ENCODE measurements at regions of chr5 and their contacts with region 1.

Region 1: DNA sequence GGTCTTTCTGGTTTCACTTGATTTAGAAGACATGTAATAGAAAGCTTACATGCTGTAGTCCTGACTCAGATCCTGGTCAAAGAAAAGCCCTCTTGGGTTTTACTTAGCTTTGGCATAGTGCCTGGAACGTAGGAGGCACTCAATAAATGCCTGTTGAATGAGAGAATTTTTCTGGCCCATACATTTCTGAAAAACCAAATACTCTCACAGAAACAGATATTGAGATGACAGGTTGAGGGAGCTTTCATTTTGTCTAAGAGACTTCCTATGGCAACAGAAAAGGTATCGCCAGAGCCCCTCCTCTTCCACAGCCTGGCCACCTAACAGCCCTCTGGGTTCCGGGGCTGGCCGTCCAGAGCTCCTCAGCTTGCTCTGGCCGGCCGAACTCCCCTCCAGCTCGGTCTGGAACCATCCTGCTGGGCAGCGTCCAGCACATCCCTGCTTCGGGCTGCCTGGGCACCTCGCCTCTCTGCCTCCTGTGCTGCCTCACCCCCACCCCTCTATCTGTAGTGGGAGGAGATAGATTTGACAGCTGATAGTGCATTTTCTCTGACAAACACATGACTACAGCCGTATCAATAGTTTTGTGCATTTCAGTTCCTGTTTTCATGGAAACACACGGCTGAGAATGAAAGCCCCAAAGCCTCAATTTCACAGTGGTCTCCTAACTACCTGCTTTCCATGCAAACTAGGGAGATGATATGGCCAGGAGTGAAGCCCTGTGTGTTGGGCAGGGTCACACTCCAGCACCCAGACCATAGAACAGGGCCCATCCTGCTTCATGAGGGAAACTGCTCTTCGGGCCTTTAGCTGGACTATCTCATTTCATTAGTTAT is 1.1 kb downstream of the IL4 start:
- DNase-seq: no peak
- H3K4me3 ChIP-seq: no peak overlapping the region
- H3K4me3 Mint-ChIP-seq: no peak overlapping the region
- H3K27ac Mint-ChIP-seq: no peak overlapping the region
- H3K4me1 ChIP-seq: peaks cover 5% of the 10 kb centered on the region; the same call in 1 of the 2 replicates
- H3K4me1 Mint-ChIP-seq: no peaks in the 10 kb centered on the region
- H3K27me3 ChIP-seq: no peaks in the 10 kb centered on the region
- H3K27me3 Mint-ChIP-seq: no peaks in the 10 kb centered on the region
- CTCF ChIP-seq: no peak

Region 2: GRCh38 chr5:132205385-132206125 is 469.3 kb before region 1 on chr5:
- CTCF ChIA-PET with region 1: no interaction called
- POLR2A ChIA-PET with region 1: no interaction called
- intact Hi-C with region 1: no loop called
- DNase-seq: no peak
- H3K4me3 ChIP-seq: no peak overlapping the region
- H3K4me3 Mint-ChIP-seq: no peak overlapping the region
- H3K27ac Mint-ChIP-seq: no peak overlapping the region
- H3K4me1 ChIP-seq: peaks cover 5% of the 10 kb centered on the region; the same call in 1 of the 2 replicates
- H3K4me1 Mint-ChIP-seq: no peaks in the 10 kb centered on the region
- H3K27me3 ChIP-seq: no peaks in the 10 kb centered on the region
- H3K27me3 Mint-ChIP-seq: no peaks in the 10 kb centered on the region
- CTCF ChIP-seq: no peak

Region 3: GRCh38 chr5:132662925-132663770 is 11.7 kb before region 1 on chr5:
- CTCF ChIA-PET with region 1: interaction called, 4 read pairs
- POLR2A ChIA-PET with region 1: interaction called, 13 read pairs
- intact Hi-C with region 1: no loop called
- DNase-seq: no peak
- H3K4me3 ChIP-seq: no peak overlapping the region
- H3K4me3 Mint-ChIP-seq: no peak overlapping the region
- H3K27ac Mint-ChIP-seq: no peak overlapping the region
- H3K4me1 ChIP-seq: peaks cover 27% of the 10 kb centered on the region
- H3K4me1 Mint-ChIP-seq: peaks cover 27% of the 10 kb centered on the region
- H3K27me3 ChIP-seq: no peaks in the 10 kb centered on the region
- H3K27me3 Mint-ChIP-seq: no peaks in the 10 kb centered on the region
- CTCF ChIP-seq: no peak

Measured in Caco-2 (cell line).